Colonic mucosa (tissue), 4 donors: ENCODE measurements at regions of chr3 and their contacts with region 1.

Region 1: GRCh38 chr3:52154117-52155094 is at the start of gene POC1A:
- DNase-seq: peak; percentile 97
- H3K4me3 ChIP-seq: peak within 1 kb of the TSS; percentile 67
- H3K27ac ChIP-seq: peak within 1 kb of the TSS; percentile 81
- H3K4me1 ChIP-seq: peaks cover 14% of the 10 kb centered on the region
- H3K27me3 ChIP-seq: no peaks in the 10 kb centered on the region
- CTCF ChIP-seq: no peak
- total RNA-seq, gene POC1A: 7.6 to 33.7 TPM

Region 2: DNA sequence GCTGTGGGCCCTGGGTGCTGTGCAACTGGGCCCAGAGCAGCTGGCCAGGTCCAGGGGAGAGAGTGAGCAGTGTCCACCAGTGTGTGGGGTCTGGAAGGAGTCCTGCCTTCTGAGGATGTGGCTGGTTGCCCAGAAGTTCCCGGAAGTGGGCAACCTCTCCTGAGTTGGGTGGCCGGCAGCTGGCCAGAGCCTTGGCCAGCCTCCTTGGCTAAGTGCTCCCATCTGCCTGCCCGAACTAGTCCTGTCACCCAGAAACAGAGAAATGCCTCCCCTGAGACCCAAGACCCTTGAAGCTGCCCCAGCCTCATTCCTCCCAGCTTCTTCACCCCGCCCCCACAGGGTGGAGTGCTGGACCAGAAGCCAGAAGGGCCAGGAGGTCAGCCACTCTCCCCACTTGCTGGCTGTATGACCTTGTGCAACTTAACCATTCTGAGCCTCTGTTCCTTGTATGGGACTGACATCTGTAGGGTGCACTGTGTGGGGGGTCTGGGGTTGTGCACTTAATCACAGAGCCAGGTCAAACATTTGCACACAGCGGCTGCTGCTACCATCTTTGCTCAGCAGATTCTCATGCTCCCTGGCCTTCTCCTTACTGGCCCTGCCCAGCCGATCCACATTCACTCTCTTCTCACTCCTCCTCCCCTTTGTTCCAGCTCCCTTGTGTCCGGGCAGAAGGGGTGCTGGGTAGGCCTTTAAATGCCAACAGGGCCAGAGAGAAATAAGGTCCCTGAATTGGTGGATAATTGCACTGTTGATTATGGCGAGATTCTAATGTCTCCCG is 36.1 kb after region 1 on chr3:
- intact Hi-C with region 1: loop called (anchors 5 kb)
- DNase-seq: peak; percentile 40
- H3K4me3 ChIP-seq: no peak overlapping the region
- H3K27ac ChIP-seq: peak overlapping the region; percentile 51
- H3K4me1 ChIP-seq: no peaks in the 10 kb centered on the region
- H3K27me3 ChIP-seq: no peaks in the 10 kb centered on the region
- CTCF ChIP-seq: no peak

Region 3: DNA sequence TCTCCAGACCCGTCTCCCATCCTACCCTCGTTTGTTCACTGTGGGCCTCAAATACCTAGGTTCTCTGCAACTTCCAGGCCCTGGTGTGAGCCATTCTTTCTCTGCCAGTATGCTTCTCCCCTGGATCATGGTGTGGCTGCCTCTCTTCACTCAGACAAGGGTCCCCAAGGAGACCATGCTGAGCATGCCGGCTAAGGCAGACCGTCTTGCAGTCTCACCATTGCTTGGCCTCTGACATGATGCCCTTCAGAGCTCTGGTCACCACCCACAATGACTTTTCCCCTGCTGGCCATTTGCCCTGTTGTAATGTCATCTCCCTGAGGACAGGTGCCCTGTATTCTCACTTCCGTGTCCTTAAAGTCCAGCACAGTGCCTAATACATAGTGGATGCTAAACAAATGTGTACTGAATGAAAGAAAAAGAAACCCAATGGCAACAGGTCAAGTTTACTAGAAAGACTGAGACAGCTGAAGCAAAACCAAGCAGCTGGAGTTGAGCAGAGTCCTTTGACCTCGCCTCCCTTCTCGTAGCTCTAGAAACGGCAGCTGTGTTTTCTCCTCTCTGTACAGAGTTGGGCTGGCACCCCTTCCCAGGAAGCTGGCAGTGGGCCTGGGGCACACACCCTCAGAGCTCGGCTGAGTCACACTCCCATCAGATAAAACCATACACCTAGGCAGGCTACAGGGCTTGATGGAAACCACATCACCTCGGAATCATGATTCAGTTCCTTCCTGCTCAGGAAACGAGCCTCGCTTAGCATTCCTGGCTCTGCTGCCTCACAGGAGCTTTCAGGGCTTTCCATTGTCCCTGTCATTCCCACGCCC is 62.4 kb after region 1 on chr3:
- intact Hi-C with region 1: loop called (anchors 10 kb)
- DNase-seq: peak; percentile 92
- H3K4me3 ChIP-seq: no peak overlapping the region
- H3K27ac ChIP-seq: peak overlapping the region; percentile 85
- H3K4me1 ChIP-seq: peaks cover 22% of the 10 kb centered on the region
- H3K27me3 ChIP-seq: no peaks in the 10 kb centered on the region
- CTCF ChIP-seq: no peak